ENCODE measurements at regions of chr13 and their contacts with region 1.

Region 1: DNA sequence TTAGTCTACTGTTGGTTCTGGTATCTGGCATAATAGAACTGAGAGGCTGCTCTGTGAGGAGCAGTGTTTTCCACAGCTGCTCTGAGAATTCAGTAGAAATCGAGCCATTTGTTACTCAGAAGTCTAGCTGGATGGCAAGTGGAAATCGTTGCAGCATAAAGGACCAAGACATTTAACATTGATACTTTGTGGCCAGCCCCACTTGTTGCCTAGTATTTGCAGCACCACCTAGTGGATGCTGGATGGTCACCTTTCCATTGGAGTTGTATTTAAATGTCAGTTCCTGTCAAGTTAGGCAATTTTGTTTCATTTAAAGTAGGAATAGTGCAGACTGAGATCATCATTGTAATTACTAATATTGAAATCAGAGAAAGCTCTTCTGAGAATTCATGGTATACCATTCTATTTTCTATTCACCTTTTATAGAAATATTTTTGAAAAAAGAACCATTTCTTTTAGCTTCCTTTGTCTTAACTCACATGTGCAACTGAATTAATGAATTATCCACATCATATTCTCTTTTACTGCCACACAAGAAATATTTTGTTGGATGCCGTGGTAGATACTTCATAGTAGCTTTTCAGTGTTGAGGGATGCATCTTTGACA is 64.6 kb downstream of the PDS5B start:
- DNase-seq: peak; percentile 77
- ATAC-seq: peak; percentile 86
- H3K4me3 Mint-ChIP-seq: no peak overlapping the region
- H3K27ac Mint-ChIP-seq: no peak overlapping the region
- H3K4me1 Mint-ChIP-seq: peaks cover 29% of the 10 kb centered on the region
- H3K27me3 Mint-ChIP-seq: no peaks in the 10 kb centered on the region

Region 2: GRCh38 chr13:32639502-32640105 is 11.2 kb before region 1 on chr13:
- CTCF ChIA-PET with region 1: interaction called, 20 read pairs
- DNase-seq: peak; percentile 61
- ATAC-seq: peak; percentile 80
- H3K4me3 Mint-ChIP-seq: no peak overlapping the region
- H3K27ac Mint-ChIP-seq: no peak overlapping the region
- H3K4me1 Mint-ChIP-seq: peaks cover 31% of the 10 kb centered on the region
- H3K27me3 Mint-ChIP-seq: no peaks in the 10 kb centered on the region

Region 3: DNA sequence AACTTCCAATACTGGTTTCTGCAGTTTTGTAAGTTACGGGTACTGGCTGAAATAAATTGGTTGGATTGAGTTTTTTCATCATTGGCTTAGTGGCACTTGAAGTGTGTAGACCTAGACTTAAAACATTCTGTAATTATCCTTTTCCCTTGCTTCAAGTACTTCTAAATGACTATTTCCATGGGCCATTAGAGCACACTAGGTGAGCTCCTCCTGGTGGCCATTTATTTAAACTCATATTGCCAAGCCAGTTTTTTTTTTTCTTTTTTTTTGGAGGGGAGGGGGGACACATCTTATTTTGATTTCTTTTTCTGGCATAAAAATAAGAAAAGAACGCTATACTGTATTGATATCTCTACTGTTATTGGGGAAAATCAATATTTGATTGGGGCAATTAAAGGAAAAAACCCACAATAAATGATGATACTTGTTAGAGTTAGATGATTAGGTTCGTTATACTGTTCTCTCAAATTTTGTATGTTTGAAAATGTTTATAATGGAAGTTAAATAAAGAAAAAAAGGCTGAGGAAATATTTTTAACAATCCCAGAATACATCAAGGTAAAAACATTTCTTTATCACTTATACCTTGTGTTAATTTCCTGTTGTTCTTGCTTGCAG is 18.3 kb after region 1 on chr13:
- CTCF ChIA-PET with region 1: interaction called, 21 read pairs
- DNase-seq: no peak
- ATAC-seq: no peak
- H3K4me3 Mint-ChIP-seq: no peak overlapping the region
- H3K27ac Mint-ChIP-seq: no peak overlapping the region
- H3K4me1 Mint-ChIP-seq: no peaks in the 10 kb centered on the region
- H3K27me3 Mint-ChIP-seq: no peaks in the 10 kb centered on the region

Region 4: GRCh38 chr13:32791545-32792172 is 140.9 kb after region 1 on chr13:
- CTCF ChIA-PET with region 1: no interaction called
- DNase-seq: peak; percentile 71
- ATAC-seq: peak; percentile 82
- H3K4me3 Mint-ChIP-seq: no peak overlapping the region
- H3K27ac Mint-ChIP-seq: peak overlapping the region; percentile 45
- H3K4me1 Mint-ChIP-seq: peaks cover 28% of the 10 kb centered on the region
- H3K27me3 Mint-ChIP-seq: peaks cover 6% of the 10 kb centered on the region